SK-N-SH (cell line): ENCODE measurements at regions of chr11 and their contacts with region 1.

Region 1: DNA sequence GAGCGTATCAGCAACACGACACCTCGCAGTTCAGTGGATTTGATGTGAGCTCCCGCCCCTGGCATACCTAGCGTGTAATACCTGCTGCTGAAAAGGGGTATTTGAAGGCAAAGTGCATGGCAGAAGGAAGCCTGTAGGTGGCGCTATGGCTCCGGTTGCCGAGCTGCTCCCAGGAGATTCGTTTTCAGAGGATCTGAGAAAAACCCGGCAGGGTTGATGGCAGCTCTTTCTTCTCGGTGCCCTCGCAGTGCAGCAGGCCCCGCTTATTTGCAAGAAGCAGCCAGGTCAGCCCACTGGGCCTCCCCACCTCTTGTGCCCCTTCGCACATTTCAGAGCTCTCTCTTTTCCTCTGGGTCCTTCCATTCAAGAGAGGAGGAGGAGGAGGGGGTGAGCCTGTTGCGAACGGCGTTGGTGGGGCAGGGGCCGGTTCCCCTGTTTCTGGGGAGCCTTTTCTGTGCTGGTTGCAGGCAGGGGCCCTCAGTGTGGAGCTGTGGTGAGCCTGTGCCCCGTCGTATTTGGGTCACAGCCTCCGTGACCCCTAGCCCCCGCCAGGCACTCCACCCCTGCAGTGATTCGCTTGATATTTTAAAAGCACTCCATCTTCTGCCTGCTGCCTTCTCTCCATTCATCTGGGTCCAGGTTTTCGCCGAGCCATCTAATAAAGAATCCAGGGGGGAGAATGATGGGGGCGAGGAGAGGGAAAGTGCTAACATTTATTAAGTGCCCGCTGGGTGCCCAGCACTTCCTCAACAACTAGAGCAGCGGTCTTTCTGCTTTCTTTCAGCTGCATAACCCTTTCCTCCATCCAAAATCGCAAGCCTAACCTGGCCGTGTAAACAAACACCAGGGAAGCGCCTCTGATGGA is 85.3 kb upstream of the SYT13 start:
- DNase-seq: peak; percentile 84
- H3K4me3 ChIP-seq: no peak overlapping the region; a peak in 1 of 4 replicates
- H3K27ac ChIP-seq: no peak overlapping the region
- H3K4me1 ChIP-seq: peaks cover 0 to 3% of the 10 kb centered on the region in 2 experiments; a peak in 2 of 4 replicates
- H3K27me3 ChIP-seq: peaks cover 25% of the 10 kb centered on the region; the same call in 1 of the 2 replicates
- CTCF ChIP-seq: peak; percentile 96
- EP300 ChIP-seq: no peak
- RAD21 ChIP-seq: peak; percentile 97

Region 2: DNA sequence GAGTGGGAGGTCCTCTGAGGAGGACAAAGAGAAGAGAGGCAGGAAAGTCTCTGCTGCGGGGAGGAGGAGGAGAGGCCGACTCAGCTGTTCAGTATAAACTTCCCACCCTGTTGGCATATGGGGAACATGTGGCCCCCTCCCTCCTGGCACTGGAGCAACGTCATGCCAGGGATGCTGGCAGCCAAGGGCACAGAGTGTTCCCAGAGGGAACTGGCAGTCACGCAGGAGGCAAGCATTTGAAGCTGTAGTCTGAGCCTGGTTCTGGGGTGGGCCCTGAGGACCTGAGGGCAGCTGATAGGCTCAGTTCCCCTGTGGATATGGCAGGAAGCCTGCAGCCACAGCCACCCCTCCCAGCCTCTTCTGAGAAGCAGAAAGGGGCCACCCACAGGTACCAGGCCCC is 711.8 kb before region 1 on chr11:
- CTCF ChIA-PET with region 1: no interaction called
- POLR2A ChIA-PET with region 1: no interaction called
- DNase-seq: peak; percentile 42
- H3K4me3 ChIP-seq: no peak overlapping the region
- H3K27ac ChIP-seq: no peak overlapping the region
- H3K4me1 ChIP-seq: peaks cover 0 to 14% of the 10 kb centered on the region in 2 experiments; a peak in 1 of 4 replicates
- H3K27me3 ChIP-seq: no peaks in the 10 kb centered on the region; the same call in 1 of the 2 replicates
- CTCF ChIP-seq: no peak
- EP300 ChIP-seq: no peak
- RAD21 ChIP-seq: no peak

Region 3: DNA sequence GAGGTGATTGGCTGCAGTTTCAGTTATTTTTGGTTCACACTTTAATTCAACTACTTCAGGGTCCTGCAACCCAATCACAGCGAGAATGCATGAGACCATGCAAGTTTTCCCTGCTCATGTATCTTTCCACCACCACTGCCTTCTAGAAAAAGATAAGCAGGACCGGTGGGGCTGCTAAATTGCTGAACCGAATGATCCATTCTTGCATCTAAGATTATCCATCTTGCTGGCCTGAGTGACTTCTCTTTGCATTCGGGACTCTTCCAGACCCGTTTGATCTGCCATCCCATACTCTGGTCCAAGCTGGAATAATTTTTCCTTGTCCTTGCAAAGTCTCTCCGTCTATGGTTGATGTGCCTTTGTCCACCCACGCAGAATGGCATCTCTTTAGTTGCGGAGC is 364.5 kb before region 1 on chr11:
- CTCF ChIA-PET with region 1: no interaction called
- POLR2A ChIA-PET with region 1: no interaction called
- DNase-seq: no peak
- H3K4me3 ChIP-seq: no peak overlapping the region
- H3K27ac ChIP-seq: no peak overlapping the region
- H3K4me1 ChIP-seq: no peaks in the 10 kb centered on the region
- H3K27me3 ChIP-seq: no peaks in the 10 kb centered on the region
- CTCF ChIP-seq: no peak
- EP300 ChIP-seq: no peak
- RAD21 ChIP-seq: no peak

Region 4: DNA sequence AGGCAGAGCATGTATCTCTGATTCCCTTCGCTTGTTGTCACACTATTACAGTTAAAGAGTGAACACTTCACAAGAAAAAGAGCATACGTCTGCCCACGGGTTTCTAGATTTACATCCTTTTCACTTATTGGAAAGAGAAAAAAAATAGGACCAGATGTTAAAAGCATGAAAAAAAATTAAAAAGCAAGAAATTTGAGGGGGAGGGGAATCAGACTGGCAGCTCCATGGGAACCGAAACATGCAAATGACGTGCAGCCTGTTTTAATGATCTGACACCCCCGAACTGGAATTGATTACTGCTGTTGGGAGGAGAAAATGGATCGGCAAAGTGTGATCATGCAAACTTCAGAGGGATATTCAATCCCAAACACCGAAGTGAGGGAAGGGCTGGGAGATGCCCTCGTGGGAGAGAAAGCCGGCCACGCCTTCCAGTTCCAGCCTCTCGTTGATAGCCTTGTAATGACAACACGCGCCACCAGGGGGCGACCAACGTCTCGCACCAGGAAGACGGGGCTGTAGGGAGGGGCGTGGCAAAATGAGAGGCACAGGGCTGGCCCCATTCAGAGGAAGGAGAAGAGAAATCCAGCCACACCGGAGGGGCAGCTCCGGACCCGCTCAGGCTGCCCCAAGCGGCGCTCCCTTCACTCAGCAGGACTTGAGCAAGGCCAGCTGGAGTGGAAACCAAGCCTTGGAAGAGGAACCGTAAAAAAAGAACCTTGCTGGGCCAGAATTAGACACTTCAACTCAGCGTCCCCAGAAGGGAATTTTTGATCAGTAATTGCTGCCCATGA is 31.6 kb before region 1 on chr11:
- CTCF ChIA-PET with region 1: interaction called, 15 read pairs
- POLR2A ChIA-PET with region 1: no interaction called
- DNase-seq: peak; percentile 90
- H3K4me3 ChIP-seq: peak overlapping the region in 1 of 2 experiments; percentile 22; a peak in 2 of 4 replicates
- H3K27ac ChIP-seq: no peak overlapping the region
- H3K4me1 ChIP-seq: peaks cover 0 to 8% of the 10 kb centered on the region in 2 experiments; a peak in 2 of 4 replicates
- H3K27me3 ChIP-seq: peaks cover 37% of the 10 kb centered on the region; the same call in 1 of the 2 replicates
- CTCF ChIP-seq: peak; percentile 83
- EP300 ChIP-seq: no peak
- RAD21 ChIP-seq: peak; percentile 67

Region 5: DNA sequence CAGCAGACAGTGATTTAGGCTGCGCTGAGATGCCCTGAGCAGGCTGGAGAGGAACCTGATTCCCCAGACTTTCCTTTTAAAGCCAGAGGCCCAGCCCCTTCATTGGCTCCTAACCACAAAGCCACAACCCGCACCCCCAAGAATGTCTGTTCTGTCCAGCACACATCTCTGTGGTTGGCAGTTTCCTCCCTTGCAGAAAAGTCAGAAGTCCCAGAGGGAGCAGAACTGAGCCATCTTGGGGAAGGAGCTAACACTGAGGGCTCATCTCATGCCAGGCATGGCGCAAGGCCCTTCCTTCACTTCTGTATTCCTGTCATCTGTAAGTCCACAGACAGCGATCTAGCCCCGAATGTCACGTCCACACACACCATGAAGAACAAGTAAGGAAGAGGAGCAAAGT is 11.7 kb after region 1 on chr11:
- CTCF ChIA-PET with region 1: interaction called, 29 read pairs
- POLR2A ChIA-PET with region 1: no interaction called
- DNase-seq: no peak
- H3K4me3 ChIP-seq: no peak overlapping the region
- H3K27ac ChIP-seq: no peak overlapping the region; a peak in 1 of 4 replicates
- H3K4me1 ChIP-seq: peaks cover 4 to 5% of the 10 kb centered on the region in 2 experiments; a peak in 2 of 4 replicates
- H3K27me3 ChIP-seq: no peaks in the 10 kb centered on the region
- CTCF ChIP-seq: no peak
- EP300 ChIP-seq: no peak; a peak in 1 of 4 replicates
- RAD21 ChIP-seq: no peak

Region 6: DNA sequence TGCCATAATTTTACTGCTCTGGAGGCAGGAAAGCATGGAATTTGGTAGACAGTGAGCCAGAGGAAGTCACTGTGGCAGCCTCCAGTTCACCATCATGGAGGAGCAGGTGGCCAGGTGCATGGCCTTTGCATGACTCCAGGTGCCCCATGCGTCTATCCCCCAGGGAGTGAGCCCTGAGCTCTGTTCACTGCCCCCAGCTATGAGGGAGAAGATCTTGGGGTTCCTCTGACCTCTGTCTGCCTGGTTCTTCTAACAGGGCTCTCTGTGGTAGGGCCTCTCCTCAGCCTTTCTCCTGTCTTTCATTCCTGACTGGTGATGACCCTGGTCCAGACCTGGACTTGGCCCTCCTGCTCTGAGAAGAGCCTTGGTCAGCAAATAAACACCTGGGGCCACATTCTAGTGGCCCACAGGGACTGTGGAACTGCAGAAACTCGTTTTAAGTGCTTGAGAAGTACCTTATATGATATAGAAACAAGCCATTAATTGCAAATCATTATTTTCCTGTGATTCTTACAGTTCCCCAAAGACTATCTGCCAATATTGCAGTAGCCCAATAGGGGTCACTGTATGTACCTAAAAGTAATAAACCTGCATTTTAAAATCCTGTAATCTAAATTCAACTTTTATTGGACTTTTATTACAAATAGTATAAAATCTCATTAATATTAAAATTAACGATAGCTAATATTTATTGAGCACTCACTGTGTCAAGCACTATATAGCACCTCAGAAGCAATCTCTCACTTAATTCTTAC is 34.6 kb after region 1 on chr11:
- CTCF ChIA-PET with region 1: interaction called, 27 read pairs
- POLR2A ChIA-PET with region 1: no interaction called
- DNase-seq: no peak
- H3K4me3 ChIP-seq: no peak overlapping the region
- H3K27ac ChIP-seq: no peak overlapping the region
- H3K4me1 ChIP-seq: peaks cover 11 to 14% of the 10 kb centered on the region in 2 experiments; a peak in 3 of 4 replicates
- H3K27me3 ChIP-seq: no peaks in the 10 kb centered on the region
- CTCF ChIP-seq: peak; percentile 73
- EP300 ChIP-seq: no peak
- RAD21 ChIP-seq: peak; percentile 68

Region 7: GRCh38 chr11:45607995-45608394 is 236.5 kb after region 1 on chr11:
- CTCF ChIA-PET with region 1: interaction called, 11 read pairs
- POLR2A ChIA-PET with region 1: no interaction called
- DNase-seq: no peak
- H3K4me3 ChIP-seq: no peak overlapping the region
- H3K27ac ChIP-seq: no peak overlapping the region
- H3K4me1 ChIP-seq: no peaks in the 10 kb centered on the region
- H3K27me3 ChIP-seq: no peaks in the 10 kb centered on the region; the same call in 1 of the 2 replicates
- CTCF ChIP-seq: no peak
- EP300 ChIP-seq: no peak
- RAD21 ChIP-seq: no peak

Region 8: GRCh38 chr11:45655347-45655756 is 283.9 kb after region 1 on chr11:
- CTCF ChIA-PET with region 1: interaction called, 302 read pairs
- POLR2A ChIA-PET with region 1: no interaction called
- DNase-seq: peak; percentile 93
- H3K4me3 ChIP-seq: peak overlapping the region in 1 of 2 experiments; percentile 40; a peak in 1 of 4 replicates
- H3K27ac ChIP-seq: no peak overlapping the region
- H3K4me1 ChIP-seq: peaks cover 19 to 26% of the 10 kb centered on the region in 2 experiments; a peak in 3 of 4 replicates
- H3K27me3 ChIP-seq: no peaks in the 10 kb centered on the region
- CTCF ChIP-seq: peak; percentile 90
- EP300 ChIP-seq: no peak
- RAD21 ChIP-seq: peak; percentile 84

Region 9: GRCh38 chr11:45754261-45754709 is 382.8 kb after region 1 on chr11:
- CTCF ChIA-PET with region 1: interaction called, 39 read pairs
- POLR2A ChIA-PET with region 1: no interaction called
- DNase-seq: peak; percentile 39
- H3K4me3 ChIP-seq: no peak overlapping the region
- H3K27ac ChIP-seq: no peak overlapping the region
- H3K4me1 ChIP-seq: peaks cover 0 to 14% of the 10 kb centered on the region in 2 experiments; a peak in 2 of 4 replicates
- H3K27me3 ChIP-seq: no peaks in the 10 kb centered on the region; the same call in 1 of the 2 replicates
- CTCF ChIP-seq: no peak
- EP300 ChIP-seq: no peak
- RAD21 ChIP-seq: no peak